Adrenal gland (tissue), 19 donors: ENCODE measurements at regions of chr16 and their contacts with region 1.

Region 1: GRCh38 chr16:1610276-1611017 is 1.4 kb downstream of the IFT140 start:
- DNase-seq: peak; percentile 87 to 94 (median 92)
- H3K4me3 ChIP-seq: peak overlapping the region in 2 of 4 donors; percentile 73 to 94
- H3K27ac ChIP-seq: peak overlapping the region; percentile 85 to 95 (median 89)
- H3K4me1 ChIP-seq: peaks cover 21 to 42% of the 10 kb centered on the region in 2 donors
- H3K27me3 ChIP-seq: no peaks in the 10 kb centered on the region
- CTCF ChIP-seq: no peak
- POLR2A ChIP-seq: peak in 1 of 2 donors; percentile 38

Region 2: GRCh38 chr16:1713933-1714332 is 103.5 kb after region 1 on chr16:
- intact Hi-C with region 1: loop called in 1 of 2 experiments (anchors 10 kb)
- DNase-seq: no peak
- H3K4me3 ChIP-seq: no peak overlapping the region
- H3K27ac ChIP-seq: peak overlapping the region in 1 of 5 donors; percentile 13
- H3K4me1 ChIP-seq: peaks cover 20 to 34% of the 10 kb centered on the region in 2 donors
- H3K27me3 ChIP-seq: no peaks in the 10 kb centered on the region
- CTCF ChIP-seq: no peak
- POLR2A ChIP-seq: no peak